ENCODE measurements at regions of chr3 and their contacts with region 1.

Region 1: GRCh38 chr3:11835028-11835639 is 11.6 kb downstream of the TAMM41 start:
- DNase-seq: no peak
- H3K4me3 ChIP-seq: no peak overlapping the region
- H3K27ac ChIP-seq: no peak overlapping the region
- H3K27me3 ChIP-seq: no peaks in the 10 kb centered on the region
- CTCF ChIP-seq: peak; percentile 56

Region 2: DNA sequence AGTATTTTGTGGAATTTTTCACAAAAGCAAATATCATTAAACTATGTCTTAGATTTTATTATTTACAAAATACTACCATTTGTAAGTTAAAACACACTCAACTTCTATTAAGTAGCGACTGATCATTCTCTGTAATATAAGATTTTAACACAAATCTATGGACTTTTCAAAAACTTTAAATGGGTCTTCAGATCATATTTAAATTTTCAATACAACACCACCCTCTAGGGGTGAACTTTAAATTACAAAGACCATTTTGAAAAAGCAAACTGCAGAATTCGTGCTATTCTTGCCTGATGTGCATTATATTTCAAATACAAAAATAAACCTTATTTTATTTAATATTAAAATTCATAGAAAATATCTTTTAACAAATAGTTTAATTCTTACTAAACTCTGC is 183.2 kb before region 1 on chr3:
- CTCF ChIA-PET with region 1: interaction called, 18 read pairs
- POLR2A ChIA-PET with region 1: interaction called, 4 read pairs
- DNase-seq: no peak
- H3K4me3 ChIP-seq: no peak overlapping the region
- H3K27ac ChIP-seq: no peak overlapping the region
- H3K27me3 ChIP-seq: no peaks in the 10 kb centered on the region
- CTCF ChIP-seq: peak; percentile 46

Region 3: DNA sequence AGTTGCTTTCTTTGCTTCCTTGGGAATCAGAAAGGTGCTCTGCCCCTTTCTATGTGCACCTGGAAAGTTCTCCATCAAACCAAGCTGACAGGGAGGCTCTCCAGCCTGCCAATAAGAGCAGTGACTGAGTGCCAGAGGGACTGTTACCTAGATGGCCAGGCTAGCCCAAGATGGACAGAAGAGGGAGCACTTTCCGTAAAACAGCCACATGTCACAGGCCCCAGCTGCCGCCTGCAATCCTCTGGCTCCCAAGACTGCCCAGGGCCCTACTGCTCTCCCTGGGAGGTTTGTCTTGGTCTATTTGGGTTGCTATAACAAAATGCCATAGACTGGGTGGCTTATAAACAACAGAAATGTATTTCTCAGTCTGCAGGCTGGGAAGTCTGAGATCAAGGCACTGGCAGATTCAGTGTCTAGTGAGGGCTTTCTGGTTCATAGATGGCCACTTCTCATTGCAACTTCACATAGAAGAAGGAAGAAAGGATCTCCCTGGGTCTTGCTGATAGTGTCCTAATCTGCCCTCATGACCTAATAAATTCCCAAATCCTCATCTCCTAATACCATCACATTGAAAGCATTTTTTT is 60.7 kb before region 1 on chr3:
- CTCF ChIA-PET with region 1: interaction called, 32 read pairs
- POLR2A ChIA-PET with region 1: no interaction called
- DNase-seq: no peak
- H3K4me3 ChIP-seq: no peak overlapping the region
- H3K27ac ChIP-seq: no peak overlapping the region
- H3K27me3 ChIP-seq: peaks cover 6% of the 10 kb centered on the region
- CTCF ChIP-seq: peak; percentile 66

Region 4: DNA sequence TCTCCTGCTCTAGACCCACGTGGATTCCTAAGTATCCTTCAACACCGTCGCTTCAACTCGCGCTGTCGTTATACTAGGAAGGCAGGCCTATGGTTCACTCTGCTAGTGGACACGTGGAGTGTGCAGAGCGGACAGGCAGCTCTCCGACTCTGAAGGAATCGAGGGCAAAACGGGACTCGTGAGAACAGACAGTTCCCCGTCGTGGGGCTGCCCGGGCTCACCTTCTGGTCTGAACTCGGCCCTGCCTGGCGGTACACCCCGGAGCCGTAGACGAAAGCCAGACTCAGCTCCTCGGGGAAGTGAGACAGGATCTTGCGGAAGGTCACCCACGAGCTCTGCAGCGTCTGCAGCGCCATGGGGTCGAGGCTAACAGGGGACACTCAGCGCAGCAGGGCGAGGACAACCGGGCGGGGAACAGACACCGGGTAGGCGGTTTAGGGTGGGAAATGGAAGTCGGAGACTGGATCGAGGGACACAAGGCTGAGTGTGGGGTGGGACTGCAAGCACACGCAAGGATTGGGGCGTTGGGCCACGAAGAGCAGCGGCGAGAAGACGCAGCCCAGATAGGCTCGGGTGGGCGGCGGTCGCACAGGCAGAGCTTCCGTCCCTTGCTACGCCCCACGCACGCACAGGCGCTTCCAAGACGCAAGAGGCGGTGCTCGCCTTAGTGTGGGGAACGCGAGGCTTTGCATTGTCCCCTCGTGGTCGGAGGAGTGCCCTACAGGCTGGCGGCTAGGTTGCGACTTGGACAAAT is 11.3 kb after region 1 on chr3 and contains the start of gene TAMM41:
- CTCF ChIA-PET with region 1: interaction called, 19 read pairs
- POLR2A ChIA-PET with region 1: interaction called, 11 read pairs
- DNase-seq: peak; percentile 45
- H3K4me3 ChIP-seq: peak within 1 kb of the TSS; percentile 95
- H3K27ac ChIP-seq: peak within 1 kb of the TSS; percentile 57
- H3K27me3 ChIP-seq: peaks cover 3% of the 10 kb centered on the region
- CTCF ChIP-seq: peak; percentile 69
- polyA plus RNA-seq, gene TAMM41: 12.4 and 12.7 TPM in 2 replicates

Region 5: DNA sequence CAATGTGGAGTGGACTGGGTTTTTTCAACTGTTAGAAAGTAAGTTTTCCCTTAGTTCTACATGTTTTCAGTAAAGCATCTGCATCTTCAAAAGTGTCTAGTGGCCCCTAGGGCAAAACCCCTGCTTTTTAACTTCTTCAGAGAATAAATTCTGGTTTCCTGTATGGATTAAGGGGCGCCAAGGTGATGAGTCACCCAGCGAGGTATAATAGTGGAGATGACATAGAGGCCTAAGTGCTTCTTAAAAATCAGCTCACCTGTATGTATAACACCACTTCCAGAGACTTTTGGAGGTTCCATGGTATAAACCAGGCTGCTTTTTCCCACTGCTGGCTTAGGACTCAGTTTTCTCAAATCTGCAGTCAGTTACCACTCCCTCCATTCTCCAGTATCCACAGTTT is 238.0 kb after region 1 on chr3:
- CTCF ChIA-PET with region 1: no interaction called
- POLR2A ChIA-PET with region 1: no interaction called
- DNase-seq: no peak
- H3K4me3 ChIP-seq: no peak overlapping the region
- H3K27ac ChIP-seq: no peak overlapping the region
- H3K27me3 ChIP-seq: no peaks in the 10 kb centered on the region
- CTCF ChIP-seq: no peak

Measured in AG04450 (cell line).